CD14-positive monocyte (primary cell): ENCODE measurements at regions of chr1 and their contacts with region 1.

Region 1: GRCh38 chr1:155084722-155085503 is 6.3 kb downstream of the EFNA3 start:
- DNase-seq: peak; percentile 84 to 88 (median 86)
- H3K4me3 ChIP-seq: peak overlapping the region; percentile 67 to 96 (median 75)
- H3K4me3 Mint-ChIP-seq: peak overlapping the region; percentile 95 to 97
- H3K27ac ChIP-seq: peak overlapping the region; percentile 71 to 77
- H3K27ac Mint-ChIP-seq: peak overlapping the region; percentile 92 to 98 (median 98)
- H3K4me1 ChIP-seq: peaks cover 50 to 59% of the 10 kb centered on the region in 2 donors
- H3K4me1 Mint-ChIP-seq: peaks cover 40% of the 10 kb centered on the region
- H3K27me3 ChIP-seq: peaks cover 37 to 45% of the 10 kb centered on the region in 2 donors
- H3K27me3 Mint-ChIP-seq: peaks cover 35 to 46% (median 44%) of the 10 kb centered on the region in 3 donors
- CTCF ChIP-seq: peak; percentile 93

Region 2: DNA sequence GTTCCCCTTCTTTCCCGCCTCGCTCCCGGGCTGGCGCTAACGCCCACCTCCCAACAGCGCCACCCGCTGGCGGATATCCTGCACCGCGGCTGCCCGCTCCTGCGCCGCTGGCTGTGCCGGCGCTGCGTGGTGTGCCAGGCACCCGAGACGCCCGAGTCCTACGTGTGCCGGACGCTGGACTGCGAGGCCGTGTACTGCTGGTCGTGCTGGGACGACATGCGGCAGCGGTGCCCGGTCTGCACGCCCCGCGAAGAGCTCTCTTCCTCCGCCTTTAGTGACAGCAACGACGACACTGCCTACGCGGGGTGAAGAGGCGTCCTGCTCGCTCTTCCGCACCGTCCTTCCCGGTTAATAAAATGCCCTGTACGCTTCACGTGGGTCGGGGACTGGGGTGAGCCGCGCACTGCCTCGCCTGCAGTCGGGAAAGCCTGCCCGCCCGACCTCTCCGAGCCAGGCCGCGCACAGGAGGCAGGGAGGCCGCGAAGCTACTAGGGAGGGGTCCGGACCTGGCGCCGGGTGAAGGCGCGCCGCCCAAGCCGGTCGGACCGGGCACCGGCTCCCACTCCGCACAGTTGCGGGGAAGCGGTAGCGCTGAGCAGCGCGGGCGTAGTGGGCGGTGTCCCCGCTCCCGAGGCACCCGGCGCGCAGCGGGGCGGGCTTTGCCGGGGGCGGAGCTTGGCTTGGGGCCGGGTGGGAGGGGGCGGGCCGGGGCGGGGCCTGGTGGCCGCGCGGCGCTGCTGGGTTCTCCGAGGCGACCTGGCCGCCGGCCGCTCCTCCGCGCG is 34.2 kb before region 1 on chr1 and contains the start of gene ADAM15:
- intact Hi-C with region 1: loop called in 1 of 2 experiments (anchors 5 kb)
- DNase-seq: peak; percentile 81 to 88 (median 85)
- H3K4me3 ChIP-seq: peak within 1 kb of the TSS; percentile 60 to 96 (median 84)
- H3K4me3 Mint-ChIP-seq: peak within 1 kb of the TSS; percentile 90 to 95
- H3K27ac ChIP-seq: peak within 1 kb of the TSS; percentile 54 to 79
- H3K27ac Mint-ChIP-seq: peak within 1 kb of the TSS; percentile 73 to 93 (median 89)
- H3K4me1 ChIP-seq: peaks cover 28 to 42% of the 10 kb centered on the region in 2 donors
- H3K4me1 Mint-ChIP-seq: peaks cover 26% of the 10 kb centered on the region
- H3K27me3 ChIP-seq: no peaks in the 10 kb centered on the region
- H3K27me3 Mint-ChIP-seq: peaks cover 0 to 5% (median 1%) of the 10 kb centered on the region in 3 donors
- CTCF ChIP-seq: peak; percentile 99
- polyA plus RNA-seq, gene ADAM15: 44.5 to 202 (median 74.3) TPM

Region 3: GRCh38 chr1:155063550-155064110 is 21.3 kb before region 1 on chr1 and contains the start of gene EFNA4:
- intact Hi-C with region 1: loop called in 1 of 2 experiments (anchors 1 kb)
- DNase-seq: peak; percentile 85 to 90 (median 87)
- H3K4me3 ChIP-seq: peak within 1 kb of the TSS; percentile 62 to 89 (median 77)
- H3K4me3 Mint-ChIP-seq: peak within 1 kb of the TSS; percentile 81 to 94
- H3K27ac ChIP-seq: peak within 1 kb of the TSS; percentile 36 to 72
- H3K27ac Mint-ChIP-seq: peak within 1 kb of the TSS; percentile 15 to 90 (median 82)
- H3K4me1 ChIP-seq: peaks cover 26 to 41% of the 10 kb centered on the region in 2 donors
- H3K4me1 Mint-ChIP-seq: peaks cover 33% of the 10 kb centered on the region
- H3K27me3 ChIP-seq: peaks cover 0 to 5% of the 10 kb centered on the region in 2 donors
- H3K27me3 Mint-ChIP-seq: peaks cover 6 to 10% (median 9%) of the 10 kb centered on the region in 3 donors
- CTCF ChIP-seq: no peak
- polyA plus RNA-seq, gene EFNA4: 2.3 to 8.0 (median 4.1) TPM

Region 4: DNA sequence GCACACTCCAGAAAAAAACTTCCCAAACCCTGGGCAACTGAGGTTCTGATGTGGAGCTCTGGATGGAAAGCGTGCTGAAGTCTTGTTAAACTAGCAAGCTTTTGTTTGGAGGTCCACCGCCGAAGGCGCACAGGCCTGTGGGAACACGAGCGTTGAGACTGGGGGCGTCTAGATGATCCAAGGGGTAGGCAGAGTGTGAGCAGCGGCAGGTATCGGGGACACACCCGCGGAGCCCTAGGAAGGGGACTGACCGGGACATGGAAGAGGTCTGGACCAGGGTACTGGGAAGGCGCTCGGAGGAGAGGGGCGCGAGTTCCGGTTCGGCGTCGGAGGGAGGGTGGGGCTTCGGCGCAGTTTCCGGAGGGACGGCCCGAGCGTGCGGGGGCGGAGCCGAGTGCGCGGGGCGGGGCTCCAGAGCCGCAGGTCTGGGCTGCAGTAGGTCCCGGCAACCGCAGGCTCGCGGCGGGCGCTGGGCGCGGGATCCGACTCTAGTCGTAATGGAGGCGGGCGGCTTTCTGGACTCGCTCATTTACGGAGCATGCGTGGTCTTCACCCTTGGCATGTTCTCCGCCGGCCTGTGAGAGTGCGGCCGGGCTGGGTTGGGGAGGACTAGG is 50.6 kb after region 1 on chr1 and contains the start of gene SLC50A1:
- intact Hi-C with region 1: loop called in 1 of 2 experiments (anchors 5 kb)
- DNase-seq: peak; percentile 94 to 96 (median 94)
- H3K4me3 ChIP-seq: peak within 1 kb of the TSS; percentile 75 to 84 (median 79)
- H3K4me3 Mint-ChIP-seq: peak within 1 kb of the TSS; percentile 97 to 99
- H3K27ac ChIP-seq: peak within 1 kb of the TSS; percentile 97 to 99
- H3K27ac Mint-ChIP-seq: peak within 1 kb of the TSS; percentile 99 to 100 (median 100)
- H3K4me1 ChIP-seq: peaks cover 31 to 46% of the 10 kb centered on the region in 2 donors
- H3K4me1 Mint-ChIP-seq: peaks cover 43% of the 10 kb centered on the region
- H3K27me3 ChIP-seq: peaks cover under 1 to 9% of the 10 kb centered on the region in 2 donors
- H3K27me3 Mint-ChIP-seq: peaks cover 6 to 17% (median 16%) of the 10 kb centered on the region in 3 donors
- CTCF ChIP-seq: no peak
- polyA plus RNA-seq, gene SLC50A1: 40.0 to 50.8 (median 49.4) TPM

Region 5: GRCh38 chr1:155158979-155159378 is 74.1 kb after region 1 on chr1:
- intact Hi-C with region 1: no loop called
- DNase-seq: no peak
- H3K4me3 ChIP-seq: no peak overlapping the region
- H3K4me3 Mint-ChIP-seq: no peak overlapping the region
- H3K27ac ChIP-seq: no peak overlapping the region
- H3K27ac Mint-ChIP-seq: no peak overlapping the region
- H3K4me1 ChIP-seq: no peaks in the 10 kb centered on the region
- H3K4me1 Mint-ChIP-seq: peaks cover 3% of the 10 kb centered on the region
- H3K27me3 ChIP-seq: no peaks in the 10 kb centered on the region
- H3K27me3 Mint-ChIP-seq: no peaks in the 10 kb centered on the region
- CTCF ChIP-seq: no peak

Region 6: GRCh38 chr1:155261852-155262673 is 177.2 kb after region 1 on chr1 and contains the start of gene SCAMP3:
- intact Hi-C with region 1: no loop called
- DNase-seq: peak; percentile 92 to 98 (median 98)
- H3K4me3 ChIP-seq: peak within 1 kb of the TSS; percentile 50 to 95 (median 77)
- H3K4me3 Mint-ChIP-seq: peak within 1 kb of the TSS; percentile 93 to 94
- H3K27ac ChIP-seq: peak within 1 kb of the TSS; percentile 56 to 83
- H3K27ac Mint-ChIP-seq: peak within 1 kb of the TSS; percentile 92 to 97 (median 95)
- H3K4me1 ChIP-seq: peaks cover 14 to 17% of the 10 kb centered on the region in 2 donors
- H3K4me1 Mint-ChIP-seq: peaks cover 20% of the 10 kb centered on the region
- H3K27me3 ChIP-seq: no peaks in the 10 kb centered on the region
- H3K27me3 Mint-ChIP-seq: no peaks in the 10 kb centered on the region
- CTCF ChIP-seq: no peak
- polyA plus RNA-seq, gene SCAMP3: 54.9 to 69.8 (median 64.9) TPM